AG04449 (cell line): ENCODE measurements at regions of chr15 and their contacts with region 1.

Region 1: DNA sequence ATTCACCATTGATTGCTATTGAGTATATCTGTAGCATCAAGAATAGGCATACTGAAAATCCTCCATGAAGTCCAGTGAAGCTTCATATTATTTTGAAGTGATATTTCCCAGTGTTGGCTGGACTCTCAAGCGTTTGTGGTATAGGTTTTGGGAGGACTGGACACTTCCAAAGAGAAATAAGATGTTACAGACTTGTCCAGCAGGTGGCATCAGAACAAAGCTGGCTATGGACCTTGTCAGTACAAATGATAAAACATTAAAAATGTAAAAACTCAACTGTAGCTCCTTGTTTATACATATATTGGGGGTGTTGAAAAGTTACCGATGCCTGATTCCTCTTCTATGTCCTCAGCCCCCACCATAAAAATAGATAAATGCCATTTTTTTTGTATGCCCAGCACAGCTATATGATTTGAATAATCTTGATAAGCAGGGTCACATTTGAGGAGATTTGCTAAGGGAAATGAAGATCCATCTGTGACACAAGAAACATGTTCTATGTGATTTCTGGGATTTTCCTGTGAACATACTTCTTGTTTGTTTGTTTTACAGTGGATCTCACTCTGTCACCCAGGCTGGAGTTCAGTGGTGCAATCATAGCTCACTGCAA is 54.5 kb upstream of the GOLGA6B start:
- DNase-seq: no peak
- H3K4me3 ChIP-seq: no peak overlapping the region
- CTCF ChIP-seq: peak; percentile 60

Region 2: GRCh38 chr15:72535911-72536310 is 64.0 kb before region 1 on chr15:
- CTCF ChIA-PET with region 1: no interaction called
- POLR2A ChIA-PET with region 1: no interaction called
- DNase-seq: no peak
- H3K4me3 ChIP-seq: no peak overlapping the region
- CTCF ChIP-seq: no peak

Region 3: DNA sequence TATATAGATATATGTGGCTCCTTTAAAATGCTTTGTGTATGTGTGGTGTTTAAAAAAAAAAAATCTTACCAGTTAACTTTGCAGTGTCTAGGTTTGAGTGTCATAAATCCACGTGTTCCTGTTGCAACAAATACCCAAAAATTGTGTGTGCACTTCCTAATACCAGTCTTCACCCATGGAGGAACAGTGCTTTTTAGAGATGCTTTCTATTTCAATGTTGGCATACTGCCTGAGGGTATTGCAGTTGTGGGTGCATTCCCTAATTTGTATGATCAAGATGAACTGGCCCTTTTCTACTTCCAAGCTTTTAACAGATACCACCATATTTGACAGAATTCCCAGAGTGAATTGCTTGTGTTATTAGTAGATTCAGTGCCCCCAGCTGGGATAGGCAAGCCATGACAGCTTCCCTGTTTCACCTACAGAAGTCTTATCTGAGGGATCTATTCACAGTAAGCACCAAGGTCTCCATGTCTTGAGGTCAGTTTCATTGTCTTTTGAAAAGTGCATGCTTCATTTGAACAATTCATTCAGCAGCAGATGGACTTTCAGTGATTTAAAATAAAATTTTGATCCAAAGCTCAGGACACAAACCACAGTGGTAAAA is 14.4 kb before region 1 on chr15:
- CTCF ChIA-PET with region 1: interaction called, 25 read pairs
- POLR2A ChIA-PET with region 1: no interaction called
- DNase-seq: no peak
- H3K4me3 ChIP-seq: no peak overlapping the region
- CTCF ChIP-seq: no peak

Region 4: DNA sequence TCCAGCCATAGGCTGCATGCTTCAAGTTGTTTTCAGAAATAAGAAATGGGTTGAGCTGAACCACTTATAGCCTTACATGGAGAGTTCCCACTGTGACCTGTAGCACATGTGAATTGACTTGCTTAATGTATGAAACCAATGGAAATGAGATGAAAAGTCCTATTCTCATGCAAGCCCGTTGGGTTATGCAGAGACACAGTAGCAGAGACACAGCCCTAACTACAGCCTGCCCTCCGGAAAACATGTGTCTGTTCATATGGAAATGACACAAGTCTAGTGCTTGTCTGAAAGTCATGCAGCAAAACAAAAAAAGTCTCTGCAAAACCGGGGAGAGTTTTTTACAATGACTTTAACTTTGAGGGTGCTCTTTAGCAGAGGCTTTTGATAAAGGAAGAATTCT is 71.6 kb after region 1 on chr15:
- CTCF ChIA-PET with region 1: interaction called, 25 read pairs
- POLR2A ChIA-PET with region 1: no interaction called
- DNase-seq: no peak
- H3K4me3 ChIP-seq: no peak overlapping the region
- CTCF ChIP-seq: no peak

Region 5: DNA sequence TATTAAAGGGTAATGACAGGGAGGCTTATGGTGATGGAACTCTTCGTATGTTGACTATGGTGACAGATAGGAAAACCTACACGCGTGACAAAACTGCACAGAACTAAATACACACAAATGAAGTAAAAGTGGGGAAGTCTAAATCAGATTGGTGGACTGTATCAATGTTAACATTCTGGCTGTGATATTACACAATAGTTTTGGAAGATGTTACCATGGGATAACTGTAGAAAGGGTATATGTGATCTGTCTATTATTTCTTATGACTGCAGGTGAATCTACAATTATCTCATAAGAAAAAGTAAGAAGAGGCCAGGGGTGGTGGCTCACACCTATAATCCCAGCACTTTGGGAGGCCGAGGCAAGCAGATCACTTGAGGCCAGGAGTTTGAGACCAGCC is 76.9 kb after region 1 on chr15:
- CTCF ChIA-PET with region 1: interaction called, 25 read pairs
- POLR2A ChIA-PET with region 1: no interaction called
- DNase-seq: no peak
- H3K4me3 ChIP-seq: no peak overlapping the region
- CTCF ChIP-seq: no peak

Region 6: DNA sequence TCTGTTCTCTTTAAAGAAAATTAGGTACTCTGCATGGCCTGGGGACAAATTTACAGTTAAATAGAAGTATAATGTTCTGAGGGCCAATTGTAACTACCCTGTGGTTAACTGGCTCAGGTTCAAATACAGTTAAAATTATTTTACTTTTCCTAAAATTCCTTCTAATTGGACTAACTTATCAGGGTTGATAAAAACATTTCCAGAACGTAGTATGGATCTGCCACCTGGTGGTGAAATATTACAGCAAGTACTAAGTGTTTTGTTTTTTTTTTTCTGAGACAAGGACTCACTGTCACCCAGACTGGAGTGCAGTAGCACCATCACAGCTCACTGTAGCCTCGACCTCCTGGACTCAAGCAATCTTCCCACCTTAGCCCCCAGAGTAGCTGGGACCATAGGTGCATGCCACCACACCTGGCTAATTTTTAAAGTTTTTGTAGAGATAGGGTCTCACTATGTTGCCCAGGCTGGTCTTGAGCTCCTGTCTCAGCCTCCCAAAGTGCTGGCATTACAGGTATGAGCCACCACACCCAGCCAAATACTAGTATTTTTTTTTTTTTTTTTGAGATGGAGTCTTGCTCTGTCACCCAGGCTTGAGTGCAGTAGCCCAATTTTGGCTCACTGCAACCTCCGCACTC is 481.5 kb after region 1 on chr15:
- CTCF ChIA-PET with region 1: interaction called, 28 read pairs
- POLR2A ChIA-PET with region 1: no interaction called
- DNase-seq: no peak
- H3K4me3 ChIP-seq: no peak overlapping the region
- CTCF ChIP-seq: peak; percentile 42